WTC11 (cell line): ENCODE measurements at regions of chr1 and their contacts with region 1.

Region 1: GRCh38 chr1:207084701-207085180 is 3.9 kb upstream of the C4BPB start:
- DNase-seq: peak; percentile 52
- ATAC-seq: peak; percentile 95
- H3K4me3 Mint-ChIP-seq: 0 out of 2 replicates have a peak overlapping the region, but pooled peaks have one; percentile 19
- H3K27ac Mint-ChIP-seq: no peak overlapping the region
- H3K4me1 Mint-ChIP-seq: peaks cover 18% of the 10 kb centered on the region
- H3K27me3 Mint-ChIP-seq: no peaks in the 10 kb centered on the region
- CTCF ChIP-seq: peak; percentile 53; the same call in 1 of the 2 replicates

Region 2: DNA sequence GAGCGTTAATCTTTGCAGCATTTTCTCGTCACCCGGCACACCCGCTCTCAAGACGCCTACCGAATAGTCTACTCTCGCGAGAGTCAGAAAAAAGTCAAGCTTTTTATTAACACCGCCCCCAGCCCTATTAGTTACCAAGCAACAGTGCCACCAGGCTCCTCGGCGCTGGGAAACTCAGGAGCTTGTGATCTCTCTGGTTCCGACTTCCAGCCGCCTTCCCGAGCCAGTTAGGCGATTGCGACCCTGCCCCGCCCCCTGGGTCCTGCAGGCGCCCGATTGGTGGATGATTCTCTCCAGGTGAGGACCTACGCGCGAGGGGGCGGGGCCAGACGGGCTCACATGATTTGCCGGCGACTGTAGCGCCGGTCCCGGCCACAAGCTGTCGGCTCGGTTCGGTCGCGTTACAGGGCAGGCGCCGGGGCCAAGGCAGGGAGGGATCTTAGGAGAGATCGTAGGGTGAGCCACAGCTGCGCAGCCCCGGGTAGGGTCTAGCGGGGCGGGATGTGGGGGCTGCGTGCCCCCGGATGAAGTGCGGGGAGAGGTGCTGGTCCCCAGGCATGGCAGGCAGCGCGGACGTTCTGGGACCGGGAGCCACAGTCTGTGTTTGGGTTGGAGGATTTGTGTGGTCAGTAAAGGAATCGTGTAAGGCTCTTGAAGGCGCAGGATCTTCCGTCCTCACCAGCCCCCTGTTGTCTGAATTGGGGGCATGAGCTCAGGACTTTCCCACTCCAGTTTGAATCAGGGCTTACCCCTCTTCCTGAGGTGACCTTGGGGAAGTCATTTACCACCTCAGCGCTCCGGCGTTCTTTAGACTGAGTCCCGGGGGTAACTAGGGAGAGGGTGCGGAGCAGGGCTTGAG is 31.6 kb before region 1 on chr1 and contains the start of gene PFKFB2:
- CTCF ChIA-PET with region 1: interaction called, 10 read pairs
- POLR2A ChIA-PET with region 1: interaction called, 3 read pairs
- DNase-seq: peak; percentile 100
- ATAC-seq: peak; percentile 93
- H3K4me3 Mint-ChIP-seq: peak within 1 kb of the TSS; percentile 95
- H3K27ac Mint-ChIP-seq: peak within 1 kb of the TSS; percentile 98
- H3K4me1 Mint-ChIP-seq: peaks cover 34% of the 10 kb centered on the region
- H3K27me3 Mint-ChIP-seq: no peaks in the 10 kb centered on the region
- CTCF ChIP-seq: no peak
- total RNA-seq, gene PFKFB2: 16.8 to 21.0 TPM (median 20.9 TPM) in 3 replicates

Region 3: DNA sequence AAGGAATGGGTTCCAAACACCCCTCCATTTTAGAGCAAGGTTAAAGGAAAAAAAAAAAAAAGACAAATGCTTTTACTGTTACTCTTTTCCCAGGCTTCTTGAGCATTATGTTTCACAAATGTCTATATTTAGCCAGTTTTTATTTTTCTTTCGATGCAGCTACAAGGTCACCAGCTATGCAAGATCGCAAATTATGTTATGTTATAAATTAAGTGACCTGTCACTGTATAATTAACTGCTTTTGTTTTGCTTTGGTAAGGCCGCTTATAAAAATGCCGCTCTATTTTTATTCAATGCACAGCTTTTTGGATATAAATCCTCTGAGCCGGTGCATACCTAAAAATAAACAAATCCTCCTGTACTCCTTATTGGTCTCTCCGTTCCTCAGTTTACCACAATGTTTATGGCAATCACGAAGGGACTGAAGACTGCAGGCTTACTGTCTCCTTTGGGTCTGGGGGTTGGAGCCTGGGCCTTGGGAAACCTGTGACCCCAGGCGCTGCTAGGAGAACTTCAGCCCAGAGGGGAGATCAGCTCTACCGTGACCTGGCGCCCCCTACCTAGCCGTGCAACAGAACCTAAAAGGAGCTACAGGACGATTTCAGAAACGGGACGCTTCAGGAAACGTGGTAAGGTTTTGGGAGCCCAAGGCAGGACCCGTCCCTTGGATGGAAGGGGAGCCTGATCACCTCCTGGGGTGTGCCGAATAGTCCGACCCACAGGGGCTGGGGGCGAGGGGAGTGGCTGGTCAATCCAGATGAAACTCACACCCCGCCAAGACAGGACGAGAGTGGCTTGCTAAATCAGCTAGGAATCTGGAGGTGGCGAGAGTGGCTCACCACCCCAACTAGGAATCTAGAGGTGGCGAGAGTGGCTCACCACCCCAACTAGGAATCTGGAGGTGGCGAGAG is 135.5 kb after region 1 on chr1:
- CTCF ChIA-PET with region 1: interaction called, 15 read pairs
- POLR2A ChIA-PET with region 1: no interaction called
- DNase-seq: peak; percentile 64
- ATAC-seq: peak; percentile 89
- H3K4me3 Mint-ChIP-seq: no peak overlapping the region
- H3K27ac Mint-ChIP-seq: no peak overlapping the region
- H3K4me1 Mint-ChIP-seq: peaks cover 23% of the 10 kb centered on the region
- H3K27me3 Mint-ChIP-seq: no peaks in the 10 kb centered on the region
- CTCF ChIP-seq: no peak

Region 4: GRCh38 chr1:207499573-207499972 is 414.8 kb after region 1 on chr1:
- CTCF ChIA-PET with region 1: interaction called, 10 read pairs
- POLR2A ChIA-PET with region 1: no interaction called
- DNase-seq: peak; percentile 64
- ATAC-seq: peak; percentile 69
- H3K4me3 Mint-ChIP-seq: no peak overlapping the region
- H3K27ac Mint-ChIP-seq: no peak overlapping the region
- H3K4me1 Mint-ChIP-seq: peaks cover 11% of the 10 kb centered on the region
- H3K27me3 Mint-ChIP-seq: peaks cover 29% of the 10 kb centered on the region
- CTCF ChIP-seq: peak; percentile 60